IMR-90 (cell line): ENCODE measurements at regions of chr3 and their contacts with region 1.

Region 1: DNA sequence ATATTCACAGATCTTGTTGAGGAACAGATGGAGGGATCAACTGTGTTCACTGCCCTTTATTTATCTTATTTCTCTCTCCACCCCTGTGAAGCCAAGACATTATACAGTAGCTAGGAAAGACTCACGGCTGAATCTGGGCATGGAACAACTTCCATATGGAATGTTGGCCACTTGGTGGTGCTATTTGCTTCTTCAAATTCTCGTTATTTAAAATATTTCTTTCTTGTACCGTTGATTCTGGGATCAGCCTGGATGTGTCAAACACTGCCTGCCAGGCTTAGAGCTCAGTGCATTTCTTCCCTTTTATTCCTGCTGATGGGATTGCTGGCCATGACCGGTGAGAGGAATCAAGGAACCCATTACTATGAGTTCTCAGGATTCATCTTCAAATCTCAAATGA is 17.5 kb upstream of the GASK1A start:
- DNase-seq: peak; percentile 56
- ATAC-seq: peak; percentile 87
- H3K4me3 ChIP-seq: no peak overlapping the region
- H3K27ac ChIP-seq: no peak overlapping the region
- H3K4me1 ChIP-seq: no peaks in the 10 kb centered on the region
- H3K27me3 ChIP-seq: no peaks in the 10 kb centered on the region; the same call in 1 of the 2 replicates
- CTCF ChIP-seq: peak; percentile 65
- POLR2A ChIP-seq: no peak
- RAD21 ChIP-seq: peak; percentile 62

Region 2: GRCh38 chr3:43024181-43024885 is 62.7 kb after region 1 on chr3:
- CTCF ChIA-PET with region 1: no interaction called
- POLR2A ChIA-PET with region 1: no interaction called
- dilution Hi-C with region 1: no loop called
- in situ Hi-C with region 1: no loop called
- intact Hi-C with region 1: no loop called
- DNase-seq: no peak
- ATAC-seq: no peak
- H3K4me3 ChIP-seq: no peak overlapping the region
- H3K27ac ChIP-seq: no peak overlapping the region
- H3K4me1 ChIP-seq: no peaks in the 10 kb centered on the region
- H3K27me3 ChIP-seq: no peaks in the 10 kb centered on the region; the same call in 1 of the 2 replicates
- CTCF ChIP-seq: no peak
- POLR2A ChIP-seq: no peak
- RAD21 ChIP-seq: no peak

Region 3: DNA sequence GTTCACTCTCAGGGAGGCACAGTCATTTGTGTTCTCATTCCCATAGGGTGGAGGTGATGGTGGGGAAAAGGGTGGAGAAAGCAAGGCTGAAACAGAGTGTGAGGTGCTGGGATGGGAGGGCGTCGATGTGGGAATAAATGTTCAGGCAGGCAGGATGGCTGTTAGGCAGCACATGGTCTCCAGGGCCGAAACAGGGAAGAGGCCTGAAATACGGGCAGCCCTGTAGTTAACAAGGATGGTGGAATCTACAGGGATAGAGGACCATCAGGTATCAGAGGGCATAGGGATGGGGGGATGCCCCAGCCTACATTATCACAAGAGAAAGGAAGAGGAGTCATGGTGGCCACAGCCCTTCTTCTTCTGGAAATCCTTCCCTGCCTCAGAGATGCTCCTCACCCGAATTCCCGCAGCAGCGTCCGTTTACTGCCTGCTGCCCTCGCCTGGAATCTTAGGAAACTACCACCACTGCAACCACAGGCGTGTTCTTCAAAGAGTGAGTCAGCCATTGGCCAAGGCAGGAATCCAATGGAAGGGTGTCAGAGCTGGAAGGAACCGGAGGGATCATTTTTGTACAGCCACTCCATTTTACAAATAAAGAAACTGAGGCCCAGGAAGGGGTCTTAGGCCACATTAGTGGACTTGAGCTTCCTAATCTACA is 194.0 kb after region 1 on chr3:
- CTCF ChIA-PET with region 1: interaction called, 46 read pairs
- POLR2A ChIA-PET with region 1: no interaction called
- dilution Hi-C with region 1: no loop called
- in situ Hi-C with region 1: loop called (anchors 5 kb)
- intact Hi-C with region 1: loop called (anchors 1 kb)
- DNase-seq: peak; percentile 83
- ATAC-seq: peak; percentile 88
- H3K4me3 ChIP-seq: no peak overlapping the region
- H3K27ac ChIP-seq: no peak overlapping the region
- H3K4me1 ChIP-seq: peaks cover 5% of the 10 kb centered on the region; the same call in 1 of the 2 replicates
- H3K27me3 ChIP-seq: peaks cover 7% of the 10 kb centered on the region; the same call in 1 of the 2 replicates
- CTCF ChIP-seq: peak; percentile 79
- POLR2A ChIP-seq: no peak
- RAD21 ChIP-seq: peak; percentile 77